ENCODE measurements at regions of chr6 and their contacts with region 1.

Region 1: DNA sequence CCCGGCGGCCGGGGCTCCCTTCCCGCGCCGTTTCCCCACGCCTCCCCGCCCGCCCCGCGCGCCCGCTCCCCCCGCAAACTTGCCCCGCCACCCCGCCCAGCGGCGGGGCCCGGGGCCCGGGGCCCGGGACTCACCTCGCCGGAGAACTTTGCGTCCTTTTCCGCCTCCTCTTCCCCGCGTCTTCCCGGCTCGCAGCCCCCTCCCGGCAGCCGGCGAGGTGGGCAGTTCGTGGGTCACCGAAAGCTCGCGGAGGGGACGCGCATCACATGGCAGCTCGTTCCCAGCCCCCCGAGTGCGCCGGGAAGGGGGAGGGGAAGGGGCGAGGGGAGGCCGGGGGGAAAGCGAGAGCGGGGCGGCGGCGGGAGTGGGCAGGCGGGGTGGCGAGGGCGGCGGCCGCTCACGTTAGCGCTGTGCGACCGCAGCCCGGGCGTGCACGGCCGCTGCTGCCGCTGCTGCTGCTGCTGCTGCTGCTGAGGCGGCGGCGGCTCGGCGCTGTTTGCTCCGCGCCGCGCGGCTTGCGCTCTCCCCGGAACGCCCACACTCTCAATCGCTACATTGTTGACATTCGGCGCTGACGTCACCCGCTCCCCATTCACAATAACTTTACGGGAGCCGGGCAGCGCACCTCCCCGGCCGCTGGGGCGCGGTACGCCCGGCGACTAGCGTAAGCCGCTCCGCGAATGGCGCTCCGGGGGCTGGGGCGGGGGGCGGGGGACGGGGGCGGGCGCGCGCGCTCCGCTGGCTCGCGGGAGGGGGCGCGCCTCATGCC is at the start of gene BACH2:
- DNase-seq: peak; percentile 84 to 97 (median 94)
- ATAC-seq: peak; percentile 85
- H3K4me3 ChIP-seq: peak within 1 kb of the TSS; percentile 59
- H3K4me3 Mint-ChIP-seq: peak within 1 kb of the TSS; percentile 79 to 97 (median 92)
- H3K27ac ChIP-seq: peak within 1 kb of the TSS; percentile 95
- H3K27ac Mint-ChIP-seq: peak within 1 kb of the TSS; percentile 89 to 100 (median 97)
- H3K4me1 ChIP-seq: peaks cover 7 to 26% of the 10 kb centered on the region in 2 donors
- H3K4me1 Mint-ChIP-seq: peaks cover 0 to 47% (median 38%) of the 10 kb centered on the region in 7 donors
- H3K27me3 ChIP-seq: no peaks in the 10 kb centered on the region
- H3K27me3 Mint-ChIP-seq: peaks cover 0 to 29% (median 0%) of the 10 kb centered on the region in 5 donors
- total RNA-seq, gene BACH2: 33.0 to 193 (median 133) TPM

Region 2: GRCh38 chr6:89970609-89971337 is 325.8 kb before region 1 on chr6:
- CTCF ChIA-PET with region 1: interaction called, 3 read pairs
- POLR2A ChIA-PET with region 1: no interaction called
- intact Hi-C with region 1: loop called in 1 of 2 experiments (anchors 1 kb)
- DNase-seq: peak in 7 of 9 donors; percentile 31 to 54 (median 39)
- ATAC-seq: peak; percentile 72
- H3K4me3 ChIP-seq: no peak overlapping the region
- H3K4me3 Mint-ChIP-seq: no peak overlapping the region
- H3K27ac ChIP-seq: no peak overlapping the region
- H3K27ac Mint-ChIP-seq: no peak overlapping the region
- H3K4me1 ChIP-seq: peaks cover 0 to 15% of the 10 kb centered on the region in 2 donors
- H3K4me1 Mint-ChIP-seq: peaks cover 9 to 53% (median 40%) of the 10 kb centered on the region in 7 donors
- H3K27me3 ChIP-seq: no peaks in the 10 kb centered on the region
- H3K27me3 Mint-ChIP-seq: no peaks in the 10 kb centered on the region

Region 3: GRCh38 chr6:90184334-90185298 is 111.9 kb before region 1 on chr6:
- CTCF ChIA-PET with region 1: interaction called, 3 read pairs
- POLR2A ChIA-PET with region 1: interaction called, 6 read pairs
- intact Hi-C with region 1: loop called in 1 of 2 experiments (anchors 1 kb)
- DNase-seq: peak in 2 of 9 donors; percentile 31 to 41
- ATAC-seq: no peak
- H3K4me3 ChIP-seq: peak overlapping the region; percentile 18
- H3K4me3 Mint-ChIP-seq: peak overlapping the region; percentile 1 to 81 (median 66)
- H3K27ac ChIP-seq: peak overlapping the region; percentile 50
- H3K27ac Mint-ChIP-seq: peak overlapping the region; percentile 47 to 97 (median 93)
- H3K4me1 ChIP-seq: peaks cover 0 to 63% of the 10 kb centered on the region in 2 donors
- H3K4me1 Mint-ChIP-seq: peaks cover 34 to 91% (median 79%) of the 10 kb centered on the region in 7 donors
- H3K27me3 ChIP-seq: no peaks in the 10 kb centered on the region
- H3K27me3 Mint-ChIP-seq: no peaks in the 10 kb centered on the region

Region 4: DNA sequence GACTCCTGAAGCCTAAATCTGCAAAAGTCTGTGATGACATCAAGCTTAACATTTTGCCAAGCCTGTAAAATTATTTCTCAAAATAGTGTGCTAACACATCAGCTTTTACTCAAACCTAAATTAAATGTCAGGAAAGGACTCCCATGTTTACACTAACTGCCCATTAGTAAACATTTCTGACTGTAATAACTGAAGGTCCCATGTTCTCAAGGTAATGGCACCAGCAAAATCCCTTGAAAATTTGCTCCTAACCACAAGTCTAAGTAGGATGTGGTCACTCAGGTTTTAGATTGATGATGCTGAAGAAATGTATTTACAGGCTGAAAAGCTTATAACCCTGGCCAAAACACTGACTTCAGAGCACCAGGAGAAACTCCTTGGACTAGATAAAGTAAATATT is 32.9 kb before region 1 on chr6:
- CTCF ChIA-PET with region 1: interaction called, 4 read pairs
- POLR2A ChIA-PET with region 1: interaction called, 179 read pairs
- intact Hi-C with region 1: loop called in 1 of 2 experiments (anchors 1 kb)
- DNase-seq: no peak
- ATAC-seq: no peak
- H3K4me3 ChIP-seq: no peak overlapping the region
- H3K4me3 Mint-ChIP-seq: peak overlapping the region in 4 of 10 donors; percentile 44 to 82 (median 68)
- H3K27ac ChIP-seq: peak overlapping the region; percentile 52
- H3K27ac Mint-ChIP-seq: peak overlapping the region in 8 of 9 donors; percentile 70 to 98 (median 96)
- H3K4me1 ChIP-seq: peaks cover 0 to 91% of the 10 kb centered on the region in 2 donors
- H3K4me1 Mint-ChIP-seq: peaks cover 48 to 100% (median 97%) of the 10 kb centered on the region in 7 donors
- H3K27me3 ChIP-seq: no peaks in the 10 kb centered on the region
- H3K27me3 Mint-ChIP-seq: no peaks in the 10 kb centered on the region

Region 5: DNA sequence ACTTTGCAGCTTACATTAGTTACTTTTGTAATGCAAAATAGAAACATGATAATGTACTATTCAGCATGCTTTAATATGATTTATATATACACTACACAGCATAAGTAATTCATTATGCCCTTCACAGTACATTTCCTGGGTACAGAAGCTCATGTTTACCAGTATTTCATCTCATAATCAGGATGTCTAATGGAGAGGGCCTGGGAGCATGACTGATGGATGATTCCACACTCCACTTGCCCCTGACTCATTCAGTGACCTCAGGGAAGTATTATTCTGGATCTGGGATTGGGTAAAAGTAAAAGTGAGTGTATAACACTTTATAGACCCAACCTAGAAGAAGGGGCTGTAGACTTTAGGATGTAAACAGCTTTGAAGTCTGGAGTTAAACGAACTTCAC is 31.5 kb after region 1 on chr6:
- CTCF ChIA-PET with region 1: no interaction called
- POLR2A ChIA-PET with region 1: no interaction called
- intact Hi-C with region 1: no loop called
- DNase-seq: no peak
- ATAC-seq: no peak
- H3K4me3 ChIP-seq: no peak overlapping the region
- H3K4me3 Mint-ChIP-seq: no peak overlapping the region
- H3K27ac ChIP-seq: no peak overlapping the region
- H3K27ac Mint-ChIP-seq: no peak overlapping the region
- H3K4me1 ChIP-seq: no peaks in the 10 kb centered on the region
- H3K4me1 Mint-ChIP-seq: no peaks in the 10 kb centered on the region
- H3K27me3 ChIP-seq: no peaks in the 10 kb centered on the region
- H3K27me3 Mint-ChIP-seq: no peaks in the 10 kb centered on the region

Region 6: DNA sequence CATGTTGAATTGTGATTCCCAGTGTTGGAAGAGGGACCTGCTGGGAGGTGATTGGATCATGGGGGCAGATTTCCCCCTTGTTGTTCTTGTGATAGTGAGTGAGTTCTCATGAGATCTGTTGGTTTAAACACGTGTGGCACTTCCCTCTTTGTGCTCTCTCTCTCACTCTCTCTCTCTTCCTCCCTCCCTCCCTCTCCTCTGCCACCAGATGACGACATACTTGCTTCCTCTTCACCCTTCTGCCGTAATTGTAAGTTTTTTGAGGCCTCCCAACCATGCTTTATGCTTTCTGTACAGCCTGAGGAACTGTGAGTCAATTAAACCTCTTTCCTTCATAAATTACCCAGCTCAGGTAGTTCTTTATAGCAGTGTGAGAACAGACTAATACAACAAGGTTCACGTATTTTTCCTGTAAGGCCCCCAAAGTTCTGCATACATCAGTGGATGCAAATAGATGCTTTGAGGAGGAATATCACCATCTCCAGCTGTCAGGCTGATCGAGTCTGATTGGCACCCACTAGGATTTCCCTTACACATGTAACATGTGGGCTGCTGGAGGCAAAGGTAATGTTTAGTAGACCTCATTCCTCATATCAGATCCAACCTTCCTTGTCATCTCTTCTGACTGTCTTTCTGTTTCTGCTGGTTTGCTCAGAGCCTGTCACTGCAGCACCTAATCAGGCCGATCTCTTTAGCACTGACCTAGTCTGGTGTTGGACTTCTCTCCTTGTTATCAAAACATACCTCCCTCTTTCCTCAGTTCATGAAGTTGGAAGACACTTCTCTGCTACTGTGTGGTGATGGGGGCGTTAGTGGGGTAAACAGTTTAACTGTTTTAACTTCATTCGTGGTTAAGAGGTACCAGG is 54.4 kb after region 1 on chr6:
- CTCF ChIA-PET with region 1: no interaction called
- POLR2A ChIA-PET with region 1: interaction called, 4 read pairs
- intact Hi-C with region 1: loop called (anchors 1 to 5 kb)
- DNase-seq: peak in 8 of 9 donors; percentile 24 to 88 (median 83)
- ATAC-seq: peak; percentile 98
- H3K4me3 ChIP-seq: no peak overlapping the region
- H3K4me3 Mint-ChIP-seq: peak overlapping the region; percentile 5 to 64 (median 50)
- H3K27ac ChIP-seq: peak overlapping the region; percentile 57
- H3K27ac Mint-ChIP-seq: peak overlapping the region; percentile 57 to 95 (median 88)
- H3K4me1 ChIP-seq: peaks cover 5 to 11% of the 10 kb centered on the region in 2 donors
- H3K4me1 Mint-ChIP-seq: peaks cover 19 to 35% (median 28%) of the 10 kb centered on the region in 7 donors
- H3K27me3 ChIP-seq: no peaks in the 10 kb centered on the region
- H3K27me3 Mint-ChIP-seq: peaks cover 0 to 4% (median 0%) of the 10 kb centered on the region in 5 donors